Testis (tissue), 5 donors: ENCODE measurements at regions of chr12 and their contacts with region 1.

Region 1: DNA sequence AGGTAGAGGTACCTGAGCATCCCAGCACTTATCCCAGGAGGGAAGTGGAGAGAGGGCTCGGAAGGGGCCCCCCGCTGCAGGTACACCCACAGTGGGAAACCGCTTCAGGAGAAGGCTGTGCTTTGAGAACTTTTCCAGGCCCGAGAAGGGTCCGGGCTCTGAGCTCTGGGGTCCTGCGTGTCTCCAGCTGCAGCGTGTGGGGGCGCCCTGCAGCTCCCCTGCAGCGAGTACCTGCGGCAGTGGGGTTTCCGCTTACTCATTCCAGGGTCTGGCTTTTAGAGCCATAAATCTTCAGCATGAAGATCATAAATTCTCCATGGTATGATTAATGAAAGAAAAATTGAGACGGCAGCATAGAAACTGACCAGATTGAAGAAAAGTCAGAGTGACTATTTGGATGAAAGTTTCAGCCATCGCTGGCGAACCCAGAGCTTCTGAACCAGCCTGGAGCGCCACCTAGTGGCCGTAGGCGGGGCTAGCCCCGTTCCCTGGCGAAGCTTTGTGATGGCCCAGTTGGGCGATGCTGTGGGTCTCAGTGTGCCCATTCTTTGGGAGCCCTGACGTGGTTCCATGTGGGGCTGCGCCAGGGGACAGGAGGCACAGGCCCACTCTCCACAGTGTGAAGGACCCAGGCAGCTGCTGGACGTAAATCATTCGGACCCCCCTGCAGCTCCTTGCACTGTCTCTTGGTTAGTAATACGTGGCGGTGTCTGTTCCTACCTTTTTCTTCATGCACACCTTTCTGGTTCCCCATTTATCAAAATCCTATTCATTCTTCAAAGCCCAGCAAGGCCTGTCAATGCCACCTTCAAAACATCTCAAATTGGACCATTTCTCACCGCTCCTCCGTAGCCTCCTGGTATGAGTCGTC is 198.2 kb downstream of the TSPAN9 start:
- DNase-seq: peak; percentile 88
- H3K4me3 ChIP-seq: no peak overlapping the region
- H3K27ac ChIP-seq: no peak overlapping the region
- H3K4me1 ChIP-seq: peaks cover 10% of the 10 kb centered on the region
- H3K27me3 ChIP-seq: no peaks in the 10 kb centered on the region
- CTCF ChIP-seq: peak; percentile 84 to 97 (median 95)
- POLR2A ChIP-seq: no peak

Region 2: DNA sequence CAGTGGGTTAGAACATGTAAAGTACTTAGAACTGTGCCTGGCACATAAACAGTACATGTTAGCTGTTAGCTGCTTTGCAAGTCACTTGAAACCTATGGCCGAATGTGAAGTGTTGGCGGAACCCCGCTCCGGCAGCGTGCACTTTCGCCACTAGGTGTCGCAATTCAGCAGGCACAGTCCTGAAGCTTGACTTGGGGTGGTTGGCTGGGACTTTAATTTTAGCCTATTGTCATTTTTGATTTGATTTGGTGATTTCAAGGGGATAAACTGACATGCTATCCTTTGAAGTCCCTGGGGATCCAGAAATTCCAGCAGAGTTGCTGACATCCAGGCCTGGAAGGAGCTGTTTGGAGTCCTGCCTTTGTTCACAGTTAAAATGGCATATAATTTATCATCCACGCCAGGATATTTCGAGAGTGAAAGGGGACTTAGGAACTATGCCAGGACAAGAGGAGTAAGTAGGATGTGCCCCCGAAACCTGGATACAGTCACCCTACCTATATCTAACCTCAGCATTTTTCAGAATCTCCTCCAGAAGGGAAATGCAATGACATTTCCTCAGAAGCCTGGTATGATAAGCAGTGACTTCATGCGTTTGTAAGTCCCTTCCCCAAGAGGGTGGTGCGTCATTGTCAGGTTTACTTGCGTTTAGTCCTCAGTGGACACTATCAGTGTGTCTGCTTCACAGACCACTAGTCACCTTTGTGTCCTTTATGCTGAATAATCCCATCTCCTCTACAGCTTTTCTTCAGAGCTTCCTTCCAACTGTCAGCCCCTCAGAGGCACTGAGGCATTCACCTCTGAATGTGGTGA is 201.8 kb before region 1 on chr12:
- intact Hi-C with region 1: loop called (anchors 5 kb)
- DNase-seq: peak; percentile 87
- H3K4me3 ChIP-seq: no peak overlapping the region
- H3K27ac ChIP-seq: no peak overlapping the region
- H3K4me1 ChIP-seq: peaks cover 11% of the 10 kb centered on the region
- H3K27me3 ChIP-seq: no peaks in the 10 kb centered on the region
- CTCF ChIP-seq: peak; percentile 89 to 99 (median 92)
- POLR2A ChIP-seq: no peak

Region 3: DNA sequence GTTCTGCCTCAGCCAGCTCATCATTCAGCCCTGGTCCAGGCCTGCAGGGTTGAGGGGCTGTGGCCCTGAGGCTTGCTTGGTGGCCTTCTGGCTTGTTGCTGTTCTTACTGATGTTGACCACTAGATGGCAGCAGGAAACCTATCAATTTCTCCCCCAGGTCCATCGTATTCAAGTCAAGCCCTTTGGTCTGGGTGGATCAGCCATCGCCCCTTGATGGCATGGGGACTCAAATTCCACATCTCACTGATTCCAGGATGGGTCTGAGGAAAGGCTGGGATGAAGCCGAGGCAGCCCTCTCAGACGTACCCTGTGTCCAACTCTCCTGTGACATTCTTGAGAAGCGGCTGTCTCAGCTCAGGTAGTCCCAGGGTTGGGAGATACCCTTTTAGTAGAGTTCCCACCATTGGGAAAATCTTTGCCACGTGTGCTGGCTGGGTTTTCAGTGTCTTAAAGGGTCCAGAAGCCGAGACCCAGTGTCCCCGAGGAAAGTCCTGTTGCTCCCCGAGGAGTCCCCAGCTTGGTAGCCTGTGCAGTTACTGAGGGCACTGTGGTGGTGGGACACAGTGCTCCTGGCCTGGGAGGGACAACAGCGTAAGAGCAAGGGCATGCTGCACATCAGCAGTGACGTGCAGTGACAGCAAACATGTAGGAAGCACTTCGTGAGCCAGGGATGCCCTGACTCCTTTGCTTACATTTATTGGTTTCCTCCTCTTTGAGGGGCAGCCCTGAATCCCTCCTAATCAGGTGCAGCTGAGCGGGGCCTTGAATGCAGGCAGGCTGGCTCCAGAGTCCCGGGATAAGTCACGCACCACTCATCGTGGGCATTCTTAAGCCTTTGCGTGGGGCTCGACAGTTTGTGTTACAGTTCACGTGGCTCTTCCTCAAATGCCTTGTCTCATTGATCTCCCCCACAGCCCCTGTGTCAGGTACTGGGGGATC is 139.6 kb before region 1 on chr12:
- intact Hi-C with region 1: loop called (anchors 5 kb)
- DNase-seq: peak; percentile 65
- H3K4me3 ChIP-seq: no peak overlapping the region
- H3K27ac ChIP-seq: no peak overlapping the region
- H3K4me1 ChIP-seq: peaks cover 18% of the 10 kb centered on the region
- H3K27me3 ChIP-seq: no peaks in the 10 kb centered on the region
- CTCF ChIP-seq: peak; percentile 66 to 85 (median 80)
- POLR2A ChIP-seq: no peak

Region 4: GRCh38 chr12:3453990-3454675 is 178.7 kb after region 1 on chr12:
- intact Hi-C with region 1: no loop called
- DNase-seq: no peak
- H3K4me3 ChIP-seq: peak overlapping the region in 1 of 2 donors; percentile 1
- H3K27ac ChIP-seq: no peak overlapping the region
- H3K4me1 ChIP-seq: no peaks in the 10 kb centered on the region
- H3K27me3 ChIP-seq: no peaks in the 10 kb centered on the region
- CTCF ChIP-seq: no peak
- POLR2A ChIP-seq: no peak